HepG2 (cell line): ENCODE measurements at regions of chr5 and their contacts with region 1.

Region 1: DNA sequence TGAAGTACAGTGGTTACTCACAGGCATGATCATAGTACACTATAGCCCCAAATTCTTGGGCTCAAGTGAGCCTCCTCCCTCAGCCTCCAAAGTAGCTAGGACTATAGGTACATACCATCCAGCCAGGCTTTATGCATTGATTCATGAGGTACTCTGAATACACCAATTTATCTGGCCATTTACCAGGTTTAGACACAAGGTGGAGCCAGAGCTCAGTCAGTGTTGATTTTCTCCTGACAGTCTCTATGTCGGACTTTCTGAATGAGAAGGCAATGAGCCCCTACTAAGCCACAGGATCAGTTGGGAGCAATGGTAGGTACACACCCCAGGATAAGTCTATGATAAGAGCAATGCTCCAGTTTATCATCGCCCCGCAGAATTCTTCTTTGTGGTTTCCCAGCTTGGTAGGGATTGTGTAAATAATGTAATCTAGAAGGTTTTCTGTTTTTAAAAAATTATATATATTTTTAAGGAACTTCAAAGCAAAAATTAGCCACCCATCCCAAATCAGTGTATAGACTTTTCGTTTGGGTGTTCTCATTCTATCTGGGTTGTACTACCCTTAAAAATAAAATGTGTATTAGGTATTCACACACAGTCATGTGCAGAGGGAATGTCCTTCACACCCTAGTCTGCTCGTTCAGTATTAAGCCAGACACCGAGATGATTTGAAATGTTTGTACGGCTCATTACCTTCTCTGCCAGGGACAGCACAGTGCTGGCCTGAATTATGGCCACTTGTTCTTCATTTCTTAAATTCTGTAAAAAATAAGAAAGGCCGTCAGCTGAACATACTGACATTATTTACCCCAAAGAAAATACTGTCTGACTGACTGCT is 118.4 kb upstream of the DPYSL3 start:
- DNase-seq: peak; percentile 65
- ATAC-seq: peak; percentile 92
- H3K4me3 ChIP-seq: no peak overlapping the region
- H3K27ac ChIP-seq: no peak overlapping the region
- H3K4me1 ChIP-seq: no peaks in the 10 kb centered on the region
- H3K27me3 ChIP-seq: no peaks in the 10 kb centered on the region
- CTCF ChIP-seq: peak; percentile 93
- EP300 ChIP-seq: no peak
- POLR2A ChIP-seq: no peak
- RAD21 ChIP-seq: peak; percentile 84

Region 2: DNA sequence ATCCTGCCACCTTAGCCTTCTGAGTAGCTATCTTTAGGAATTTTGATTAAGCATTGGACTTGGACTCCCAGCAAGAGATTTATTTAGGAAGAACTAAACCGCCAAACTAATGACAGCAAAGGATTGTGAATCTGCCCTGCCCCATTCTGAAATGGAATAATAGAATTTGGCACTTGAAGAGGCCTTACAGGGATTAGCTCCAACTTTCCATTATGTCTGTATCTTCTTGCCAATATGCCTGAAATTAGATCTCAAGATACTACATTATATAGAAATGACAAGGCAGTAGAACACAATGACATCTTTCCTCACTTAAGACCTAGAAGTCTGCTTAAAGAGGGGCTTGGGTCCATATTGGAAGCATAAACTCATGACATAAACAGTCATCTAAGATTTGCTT is 41.4 kb before region 1 on chr5:
- CTCF ChIA-PET with region 1: no interaction called
- POLR2A ChIA-PET with region 1: no interaction called
- in situ Hi-C with region 1: no loop called
- intact Hi-C with region 1: no loop called
- DNase-seq: no peak
- ATAC-seq: no peak
- H3K4me3 ChIP-seq: no peak overlapping the region
- H3K27ac ChIP-seq: no peak overlapping the region
- H3K4me1 ChIP-seq: no peaks in the 10 kb centered on the region
- H3K27me3 ChIP-seq: no peaks in the 10 kb centered on the region
- CTCF ChIP-seq: no peak
- EP300 ChIP-seq: no peak
- POLR2A ChIP-seq: no peak
- RAD21 ChIP-seq: no peak

Region 3: DNA sequence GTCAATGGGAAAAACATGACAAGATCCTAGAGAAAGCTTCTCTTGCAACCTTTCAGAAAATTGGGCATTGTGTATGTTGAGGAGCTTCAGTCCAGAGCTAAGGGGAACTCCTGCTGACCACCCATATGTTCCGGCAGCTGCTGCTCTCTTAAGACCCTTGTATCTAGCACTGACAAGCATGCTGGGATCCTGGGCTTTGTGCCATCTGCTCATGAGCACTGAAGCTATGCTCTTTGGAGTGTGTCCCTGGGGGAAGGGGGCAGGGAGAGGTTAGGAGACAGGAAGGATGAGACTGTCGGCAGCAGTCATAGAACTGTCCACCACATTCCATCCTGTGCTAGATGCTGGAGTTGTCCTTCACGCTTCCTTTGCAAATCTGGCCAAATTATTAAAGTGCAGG is 45.0 kb after region 1 on chr5:
- CTCF ChIA-PET with region 1: interaction called, 46 read pairs
- POLR2A ChIA-PET with region 1: no interaction called
- in situ Hi-C with region 1: loop called (anchors 5 kb)
- intact Hi-C with region 1: loop called (anchors 1 kb)
- DNase-seq: no peak
- ATAC-seq: no peak
- H3K4me3 ChIP-seq: no peak overlapping the region
- H3K27ac ChIP-seq: no peak overlapping the region
- H3K4me1 ChIP-seq: peaks cover 19% of the 10 kb centered on the region
- H3K27me3 ChIP-seq: no peaks in the 10 kb centered on the region
- CTCF ChIP-seq: no peak
- EP300 ChIP-seq: no peak
- POLR2A ChIP-seq: no peak
- RAD21 ChIP-seq: no peak

Region 4: GRCh38 chr5:147690595-147690994 is 62.3 kb after region 1 on chr5:
- CTCF ChIA-PET with region 1: interaction called, 5 read pairs
- POLR2A ChIA-PET with region 1: no interaction called
- in situ Hi-C with region 1: no loop called
- intact Hi-C with region 1: loop called (anchors 1 kb)
- DNase-seq: peak; percentile 25
- ATAC-seq: peak; percentile 83
- H3K4me3 ChIP-seq: no peak overlapping the region
- H3K27ac ChIP-seq: no peak overlapping the region
- H3K4me1 ChIP-seq: no peaks in the 10 kb centered on the region
- H3K27me3 ChIP-seq: no peaks in the 10 kb centered on the region
- CTCF ChIP-seq: peak; percentile 55
- EP300 ChIP-seq: no peak
- POLR2A ChIP-seq: no peak
- RAD21 ChIP-seq: no peak

Region 5: GRCh38 chr5:147822686-147823491 is 194.6 kb after region 1 on chr5:
- CTCF ChIA-PET with region 1: interaction called, 26 read pairs
- POLR2A ChIA-PET with region 1: no interaction called
- in situ Hi-C with region 1: loop called (anchors 5 kb)
- intact Hi-C with region 1: loop called (anchors 1 kb)
- DNase-seq: peak; percentile 17
- ATAC-seq: peak; percentile 82
- H3K4me3 ChIP-seq: no peak overlapping the region
- H3K27ac ChIP-seq: no peak overlapping the region
- H3K4me1 ChIP-seq: peaks cover 10% of the 10 kb centered on the region; the same call in 1 of the 2 replicates
- H3K27me3 ChIP-seq: no peaks in the 10 kb centered on the region
- CTCF ChIP-seq: peak; percentile 79
- EP300 ChIP-seq: no peak
- POLR2A ChIP-seq: no peak
- RAD21 ChIP-seq: peak; percentile 64

Region 6: GRCh38 chr5:147935032-147935431 is 306.8 kb after region 1 on chr5:
- CTCF ChIA-PET with region 1: no interaction called
- POLR2A ChIA-PET with region 1: no interaction called
- in situ Hi-C with region 1: loop called (anchors 10 kb)
- intact Hi-C with region 1: loop called (anchors 1 kb)
- DNase-seq: peak; percentile 16
- ATAC-seq: no peak
- H3K4me3 ChIP-seq: no peak overlapping the region
- H3K27ac ChIP-seq: no peak overlapping the region
- H3K4me1 ChIP-seq: no peaks in the 10 kb centered on the region
- H3K27me3 ChIP-seq: no peaks in the 10 kb centered on the region
- CTCF ChIP-seq: peak; percentile 23; the same call in 1 of the 2 replicates
- EP300 ChIP-seq: no peak
- POLR2A ChIP-seq: no peak
- RAD21 ChIP-seq: no peak